Esophagus muscularis mucosa (tissue), 4 donors: ENCODE measurements at regions of chr4 and their contacts with region 1.

Region 1: GRCh38 chr4:184745831-184746795 is 12.2 kb upstream of the CENPU start:
- DNase-seq: no peak
- H3K4me3 ChIP-seq: peak overlapping the region in 3 of 4 donors; percentile 28 to 32 (median 30)
- H3K27ac ChIP-seq: peak overlapping the region; percentile 75 to 80 (median 78)
- H3K4me1 ChIP-seq: peaks cover 19 to 36% (median 30%) of the 10 kb centered on the region in 4 donors
- H3K27me3 ChIP-seq: no peaks in the 10 kb centered on the region
- CTCF ChIP-seq: peak; percentile 81 to 83 (median 83)
- EP300 ChIP-seq: no peak
- POLR2A ChIP-seq: no peak

Region 2: GRCh38 chr4:184815046-184815877 is 69.1 kb after region 1 on chr4:
- intact Hi-C with region 1: no loop called
- DNase-seq: no peak
- H3K4me3 ChIP-seq: peak overlapping the region in 2 of 4 donors; percentile 1 to 34
- H3K27ac ChIP-seq: peak overlapping the region; percentile 45 to 65 (median 57)
- H3K4me1 ChIP-seq: peaks cover 40 to 64% (median 55%) of the 10 kb centered on the region in 4 donors
- H3K27me3 ChIP-seq: no peaks in the 10 kb centered on the region
- CTCF ChIP-seq: no peak
- EP300 ChIP-seq: no peak
- POLR2A ChIP-seq: no peak

Region 3: DNA sequence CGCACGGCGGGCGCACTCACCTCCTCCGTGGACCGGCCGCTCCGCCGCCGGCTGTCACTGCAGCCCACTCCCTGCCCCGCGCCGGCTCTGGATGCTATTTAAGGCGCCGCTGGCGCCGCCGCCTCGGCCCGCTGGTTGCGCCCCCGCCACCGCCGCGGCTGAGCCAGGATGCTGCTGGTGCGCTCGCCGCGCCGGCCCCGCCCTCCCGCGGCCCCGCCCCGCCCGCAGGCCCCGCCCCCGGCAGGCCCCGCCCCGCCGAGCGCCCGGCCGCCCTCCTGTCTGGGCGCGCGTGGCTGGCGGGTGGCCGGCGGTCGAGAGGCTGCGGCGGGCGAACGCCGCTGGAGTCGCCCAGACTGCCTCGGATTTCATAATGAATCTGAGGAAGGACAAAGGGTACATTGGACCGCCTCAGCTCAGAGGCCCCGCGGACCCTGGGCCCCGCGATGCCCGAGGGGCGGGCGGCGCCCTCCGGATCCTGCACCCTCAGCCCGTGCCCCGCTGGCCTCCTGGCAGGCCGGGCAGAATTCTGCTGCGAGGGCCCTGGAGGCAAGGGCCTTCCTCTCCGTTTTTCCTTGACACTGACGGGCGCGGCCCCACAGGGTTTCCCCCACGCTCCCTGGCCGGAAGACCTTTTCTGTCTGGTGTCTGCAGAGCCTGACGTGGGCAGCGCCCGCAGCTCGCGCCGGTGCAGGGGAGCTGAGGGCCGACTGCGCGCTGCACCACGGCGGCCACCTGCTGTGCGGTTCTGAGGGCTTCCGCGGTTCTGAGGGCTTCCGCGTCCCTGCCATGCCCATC is 80.0 kb after region 1 on chr4 and contains the start of gene ACSL1:
- intact Hi-C with region 1: loop called (anchors 2 kb)
- DNase-seq: no peak
- H3K4me3 ChIP-seq: peak within 1 kb of the TSS; percentile 74 to 91 (median 84)
- H3K27ac ChIP-seq: peak within 1 kb of the TSS; percentile 78 to 93 (median 88)
- H3K4me1 ChIP-seq: peaks cover 22 to 29% (median 27%) of the 10 kb centered on the region in 4 donors
- H3K27me3 ChIP-seq: no peaks in the 10 kb centered on the region
- CTCF ChIP-seq: peak in 2 of 3 experiments; percentile 19
- EP300 ChIP-seq: no peak
- POLR2A ChIP-seq: peak; percentile 22
- total RNA-seq, gene ACSL1: 43.5 to 136 (median 52.0) TPM

Region 4: DNA sequence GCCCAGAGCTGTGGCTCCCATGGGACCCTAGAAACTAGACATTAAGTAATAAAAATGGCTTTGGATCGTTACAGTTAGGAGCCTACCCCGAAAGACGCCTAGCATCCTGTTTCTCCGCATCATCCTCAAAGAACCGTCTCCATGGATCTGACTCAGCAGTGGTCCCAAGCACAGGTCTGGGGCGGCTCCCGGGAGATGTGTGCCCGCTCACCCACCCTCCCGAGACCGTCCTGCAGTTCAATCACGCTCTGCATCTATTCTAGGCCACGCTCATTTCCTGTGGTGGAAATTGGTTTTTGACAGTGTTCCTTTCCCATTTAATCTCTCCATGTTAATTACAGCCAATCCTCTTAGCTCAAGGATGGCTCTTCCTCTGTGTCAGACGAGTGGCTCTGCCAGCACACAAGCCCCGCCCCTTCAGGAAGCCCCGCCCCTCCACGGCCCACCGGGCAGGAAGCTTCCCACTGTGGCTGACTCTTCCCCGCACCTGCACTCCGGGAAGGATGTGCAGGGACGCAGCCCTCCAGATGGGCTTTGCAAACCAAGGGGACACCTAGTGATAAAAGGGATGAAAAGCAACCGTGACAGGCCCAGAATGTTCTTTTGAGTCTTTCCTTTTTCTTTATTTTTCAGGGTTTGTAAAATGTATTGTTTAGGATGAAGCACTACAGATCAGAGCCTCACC is 237.7 kb after region 1 on chr4:
- intact Hi-C with region 1: loop called (anchors 2 kb)
- DNase-seq: no peak
- H3K4me3 ChIP-seq: no peak overlapping the region
- H3K27ac ChIP-seq: no peak overlapping the region
- H3K4me1 ChIP-seq: peaks cover 4 to 8% (median 7%) of the 10 kb centered on the region in 4 donors
- H3K27me3 ChIP-seq: peaks cover 0 to 19% (median 0%) of the 10 kb centered on the region in 4 donors
- CTCF ChIP-seq: peak in 2 of 3 experiments; percentile 9 to 54
- EP300 ChIP-seq: no peak
- POLR2A ChIP-seq: no peak

Region 5: DNA sequence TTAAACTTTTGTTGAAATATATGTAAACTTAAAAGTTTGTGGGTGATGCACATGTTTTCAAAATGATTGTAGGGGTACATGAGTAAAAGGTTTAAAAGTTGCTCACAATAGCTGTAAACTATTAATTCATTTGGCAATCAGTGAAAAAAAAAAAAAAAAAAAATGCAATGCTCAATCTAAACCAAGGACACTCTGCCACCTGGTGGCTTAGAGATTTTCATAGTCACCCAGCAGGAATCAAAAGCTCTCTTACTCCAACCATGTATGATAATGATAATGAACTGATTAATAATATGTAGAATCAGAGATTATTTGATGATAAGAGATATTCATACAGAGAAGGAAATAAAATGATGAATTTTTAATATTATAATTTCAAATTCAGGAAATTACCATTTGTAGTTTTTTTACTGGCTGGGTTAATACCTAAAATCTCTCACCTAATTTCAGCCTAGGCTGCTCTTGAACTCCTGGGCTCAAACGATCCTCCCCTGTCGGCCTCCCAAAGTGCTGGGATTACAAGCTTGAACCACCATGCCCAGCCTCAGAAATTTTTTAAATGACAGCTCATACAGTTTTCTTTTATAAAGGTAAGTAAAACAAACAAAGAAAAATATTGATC is 350.0 kb after region 1 on chr4:
- intact Hi-C with region 1: loop called (anchors 10 kb)
- DNase-seq: no peak
- H3K4me3 ChIP-seq: no peak overlapping the region
- H3K27ac ChIP-seq: no peak overlapping the region
- H3K4me1 ChIP-seq: no peaks in the 10 kb centered on the region
- H3K27me3 ChIP-seq: peaks cover 0 to 4% (median 0%) of the 10 kb centered on the region in 4 donors
- CTCF ChIP-seq: peak; percentile 47 to 64 (median 56)
- EP300 ChIP-seq: no peak
- POLR2A ChIP-seq: no peak